CD4-positive, alpha-beta memory T cell (primary cell): ENCODE measurements at regions of chr1 and their contacts with region 1.

Region 1: DNA sequence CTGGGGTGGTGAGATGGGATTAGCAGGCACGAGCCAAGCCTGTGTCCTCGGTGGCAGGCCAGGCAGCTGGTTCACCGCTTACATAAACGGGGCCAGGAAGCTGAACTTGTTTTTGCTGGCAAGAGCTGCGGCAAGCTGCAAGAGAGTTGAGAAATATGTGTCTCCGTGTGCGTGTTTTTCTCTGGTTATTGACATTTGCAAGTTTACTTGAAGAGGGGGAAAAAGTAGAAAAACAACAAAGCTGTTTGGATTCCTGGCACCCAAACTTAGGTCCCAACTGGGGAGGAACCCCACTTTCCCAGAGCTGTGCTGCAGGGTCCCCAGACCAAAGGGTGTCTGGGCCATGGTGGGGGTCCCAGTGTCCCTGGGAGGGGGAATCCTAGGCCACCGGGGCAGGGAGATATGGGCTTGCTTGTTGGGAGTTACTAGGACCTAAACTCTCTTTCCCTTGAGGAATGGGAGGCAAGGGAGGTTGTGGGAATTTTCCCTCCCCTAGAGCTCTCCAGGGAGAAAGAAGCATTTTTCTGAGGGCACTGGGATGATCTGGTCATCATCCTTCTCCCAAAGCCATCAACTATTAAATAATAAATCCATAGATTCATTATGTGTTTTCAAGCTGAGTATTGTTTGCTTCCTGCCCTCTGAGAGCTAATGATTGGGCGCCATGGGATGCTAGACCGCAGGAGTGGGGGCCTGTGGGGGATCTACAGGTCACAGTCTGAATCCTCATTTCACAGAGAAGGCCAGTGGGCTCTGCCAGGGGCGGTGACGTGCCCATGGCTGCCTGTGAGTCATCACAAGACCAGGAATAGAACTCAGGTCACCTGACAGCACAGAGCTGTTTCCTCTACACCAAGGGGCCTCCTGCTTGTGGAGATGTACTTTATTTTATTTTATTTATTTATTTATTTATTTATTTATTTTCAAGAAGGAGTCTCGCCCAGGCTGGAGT is 14.8 kb downstream of the IL6R start:
- DNase-seq: peak; percentile 40 to 81 (median 48)
- H3K4me3 ChIP-seq: peak overlapping the region; percentile 50 to 54
- H3K4me3 Mint-ChIP-seq: peak overlapping the region; percentile 64 to 84 (median 81)
- H3K27ac ChIP-seq: peak overlapping the region; percentile 58
- H3K27ac Mint-ChIP-seq: peak overlapping the region; percentile 85 to 97 (median 94)
- H3K4me1 ChIP-seq: peaks cover 94% of the 10 kb centered on the region
- H3K4me1 Mint-ChIP-seq: peaks cover 57 to 100% (median 82%) of the 10 kb centered on the region in 4 donors
- H3K27me3 ChIP-seq: no peaks in the 10 kb centered on the region
- H3K27me3 Mint-ChIP-seq: no peaks in the 10 kb centered on the region

Region 2: DNA sequence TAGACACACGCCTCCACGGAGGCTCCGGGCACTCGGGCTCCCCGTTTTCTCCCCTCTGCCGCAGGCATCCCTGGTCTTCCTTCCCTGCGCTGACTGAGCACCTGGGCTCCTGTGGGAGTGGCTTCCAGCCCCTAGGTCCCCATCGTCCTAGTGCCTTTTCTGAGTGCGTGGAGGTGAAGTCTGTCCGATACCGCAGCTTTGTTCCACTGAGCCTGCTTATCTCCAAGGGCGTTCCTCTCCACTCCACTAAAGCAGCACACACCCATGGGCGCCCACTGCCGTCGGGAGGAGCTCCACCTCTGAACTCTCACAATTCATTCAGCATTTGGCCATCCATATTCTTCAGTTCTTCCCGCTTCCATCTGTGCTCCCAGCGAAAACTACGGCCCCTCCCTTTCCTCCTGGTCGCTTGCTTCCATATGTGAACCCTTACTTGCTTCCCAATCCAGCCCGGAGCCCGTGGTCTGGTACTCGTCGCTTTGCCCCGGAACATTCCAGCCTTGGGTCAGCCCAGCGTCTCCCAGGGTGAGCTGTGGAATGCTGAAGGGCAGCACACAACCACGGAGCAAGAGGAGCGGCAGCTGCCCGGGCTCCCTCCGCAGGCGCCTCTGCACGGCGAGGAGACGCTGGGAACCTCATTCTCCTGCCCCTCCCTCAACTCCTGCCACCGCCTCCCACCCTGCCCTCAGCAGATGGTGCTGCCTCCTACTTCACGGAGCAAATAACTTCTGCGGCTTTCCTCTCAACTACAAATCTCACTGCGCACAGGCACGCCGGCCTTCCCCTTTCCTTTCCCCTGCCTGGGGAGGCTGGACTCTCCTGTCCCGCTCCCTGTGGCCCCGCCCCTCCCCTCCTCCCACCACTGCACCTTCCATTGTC is 67.1 kb before region 1 on chr1:
- CTCF ChIA-PET with region 1: interaction called, 5 read pairs
- POLR2A ChIA-PET with region 1: interaction called, 17 read pairs
- intact Hi-C with region 1: no loop called
- DNase-seq: peak; percentile 44 to 68 (median 48)
- H3K4me3 ChIP-seq: peak overlapping the region; percentile 69 to 77
- H3K4me3 Mint-ChIP-seq: peak overlapping the region; percentile 84 to 95 (median 92)
- H3K27ac ChIP-seq: peak overlapping the region; percentile 51
- H3K27ac Mint-ChIP-seq: peak overlapping the region; percentile 38 to 96 (median 90)
- H3K4me1 ChIP-seq: peaks cover 54% of the 10 kb centered on the region
- H3K4me1 Mint-ChIP-seq: peaks cover 30 to 61% (median 44%) of the 10 kb centered on the region in 4 donors
- H3K27me3 ChIP-seq: no peaks in the 10 kb centered on the region
- H3K27me3 Mint-ChIP-seq: no peaks in the 10 kb centered on the region

Region 3: GRCh38 chr1:154386643-154387352 is 33.1 kb before region 1 on chr1:
- CTCF ChIA-PET with region 1: no interaction called
- POLR2A ChIA-PET with region 1: interaction called, 16 read pairs
- intact Hi-C with region 1: no loop called
- DNase-seq: peak in 4 of 5 donors; percentile 43 to 86 (median 58)
- H3K4me3 ChIP-seq: peak overlapping the region in 1 of 2 donors; percentile 34
- H3K4me3 Mint-ChIP-seq: peak overlapping the region; percentile 79 to 88 (median 85)
- H3K27ac ChIP-seq: peak overlapping the region; percentile 67
- H3K27ac Mint-ChIP-seq: peak overlapping the region; percentile 88 to 99 (median 97)
- H3K4me1 ChIP-seq: peaks cover 36% of the 10 kb centered on the region
- H3K4me1 Mint-ChIP-seq: peaks cover 22 to 34% (median 28%) of the 10 kb centered on the region in 4 donors
- H3K27me3 ChIP-seq: no peaks in the 10 kb centered on the region
- H3K27me3 Mint-ChIP-seq: no peaks in the 10 kb centered on the region

Region 4: GRCh38 chr1:154431586-154432373 is 11.9 kb after region 1 on chr1:
- CTCF ChIA-PET with region 1: interaction called, 7 read pairs
- POLR2A ChIA-PET with region 1: interaction called, 22 read pairs
- intact Hi-C with region 1: no loop called
- DNase-seq: no peak
- H3K4me3 ChIP-seq: no peak overlapping the region
- H3K4me3 Mint-ChIP-seq: peak overlapping the region in 7 of 8 donors; percentile 31 to 77 (median 60)
- H3K27ac ChIP-seq: peak overlapping the region; percentile 19
- H3K27ac Mint-ChIP-seq: peak overlapping the region; percentile 2 to 93 (median 83)
- H3K4me1 ChIP-seq: peaks cover 65% of the 10 kb centered on the region
- H3K4me1 Mint-ChIP-seq: peaks cover 27 to 69% (median 48%) of the 10 kb centered on the region in 4 donors
- H3K27me3 ChIP-seq: no peaks in the 10 kb centered on the region
- H3K27me3 Mint-ChIP-seq: no peaks in the 10 kb centered on the region

Region 5: GRCh38 chr1:154442006-154442740 is 22.3 kb after region 1 on chr1:
- CTCF ChIA-PET with region 1: interaction called, 16 read pairs
- POLR2A ChIA-PET with region 1: interaction called, 8 read pairs
- intact Hi-C with region 1: no loop called
- DNase-seq: no peak
- H3K4me3 ChIP-seq: no peak overlapping the region
- H3K4me3 Mint-ChIP-seq: peak overlapping the region; percentile 32 to 87 (median 76)
- H3K27ac ChIP-seq: peak overlapping the region; percentile 47
- H3K27ac Mint-ChIP-seq: peak overlapping the region; percentile 81 to 99 (median 94)
- H3K4me1 ChIP-seq: peaks cover 69% of the 10 kb centered on the region
- H3K4me1 Mint-ChIP-seq: peaks cover 47 to 75% (median 64%) of the 10 kb centered on the region in 4 donors
- H3K27me3 ChIP-seq: no peaks in the 10 kb centered on the region
- H3K27me3 Mint-ChIP-seq: no peaks in the 10 kb centered on the region